Activated CD8-positive, alpha-beta T cell treated with anti-CD3 and anti-CD28 coated beads for 36 hours (primary cell): ENCODE measurements at regions of chr11 and their contacts with region 1.

Region 1: GRCh38 chr11:65013692-65014145 is 241 bp upstream of the ARL2 start:
- DNase-seq: peak; percentile 91
- ATAC-seq: peak; percentile 90
- H3K4me3 Mint-ChIP-seq: peak overlapping the region; percentile 79
- H3K27ac Mint-ChIP-seq: peak overlapping the region; percentile 99
- H3K4me1 Mint-ChIP-seq: peaks cover 23% of the 10 kb centered on the region
- H3K27me3 Mint-ChIP-seq: no peaks in the 10 kb centered on the region
- CTCF ChIP-seq: peak; percentile 77

Region 2: DNA sequence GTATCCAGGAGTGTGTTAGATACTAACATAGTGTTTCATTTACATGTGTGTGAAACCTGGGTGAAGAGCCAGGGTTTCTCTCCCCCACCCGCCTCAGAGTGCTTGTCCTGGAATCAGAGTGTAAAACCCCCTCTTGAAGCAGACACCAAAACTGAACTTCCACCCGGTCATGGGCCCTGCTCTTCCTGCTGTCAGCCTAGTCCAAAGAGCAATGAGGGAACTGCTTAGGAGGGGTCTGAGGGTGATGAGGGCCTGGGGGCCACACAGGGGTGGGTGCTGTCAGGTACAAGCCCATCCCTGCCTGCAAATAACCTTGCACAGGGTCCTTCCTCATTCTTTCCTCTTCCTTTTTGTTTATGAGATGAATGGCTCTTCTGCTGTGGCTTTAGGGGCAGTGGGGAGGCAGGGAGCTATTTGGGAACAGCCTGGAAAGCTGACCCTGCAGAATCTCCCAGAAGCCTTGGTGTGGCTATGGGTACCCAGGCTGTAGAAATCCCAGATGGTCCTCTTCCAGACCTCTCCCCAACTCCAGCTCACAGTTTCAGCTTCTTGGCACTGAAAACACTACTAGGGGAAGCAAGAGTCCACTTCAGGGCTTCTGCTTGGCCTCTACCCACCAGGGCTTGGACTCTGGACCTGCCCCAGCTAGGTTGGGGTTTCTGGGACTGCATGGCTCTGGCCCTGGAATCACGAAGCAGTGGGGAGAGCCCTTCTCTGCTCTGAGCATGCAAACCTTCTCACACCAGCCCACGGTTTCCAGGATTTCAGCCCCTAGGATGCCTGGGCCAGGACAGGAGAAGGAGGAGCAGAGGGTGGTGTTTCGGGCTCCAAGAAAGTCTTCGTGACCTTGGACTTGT is 25.5 kb before region 1 on chr11:
- CTCF ChIA-PET with region 1: no interaction called
- POLR2A ChIA-PET with region 1: no interaction called
- intact Hi-C with region 1: no loop called
- DNase-seq: no peak
- ATAC-seq: no peak
- H3K4me3 Mint-ChIP-seq: no peak overlapping the region
- H3K27ac Mint-ChIP-seq: no peak overlapping the region
- H3K4me1 Mint-ChIP-seq: peaks cover 6% of the 10 kb centered on the region
- H3K27me3 Mint-ChIP-seq: peaks cover 4% of the 10 kb centered on the region
- CTCF ChIP-seq: no peak

Region 3: GRCh38 chr11:65003282-65003681 is 10.4 kb before region 1 on chr11:
- CTCF ChIA-PET with region 1: interaction called, 11 read pairs
- POLR2A ChIA-PET with region 1: interaction called, 3 read pairs
- intact Hi-C with region 1: no loop called
- DNase-seq: no peak
- ATAC-seq: no peak
- H3K4me3 Mint-ChIP-seq: no peak overlapping the region
- H3K27ac Mint-ChIP-seq: no peak overlapping the region
- H3K4me1 Mint-ChIP-seq: peaks cover 7% of the 10 kb centered on the region
- H3K27me3 Mint-ChIP-seq: no peaks in the 10 kb centered on the region
- CTCF ChIP-seq: no peak

Region 4: GRCh38 chr11:65040847-65041621 is 27.3 kb after region 1 on chr11 and contains the start of gene SAC3D1:
- CTCF ChIA-PET with region 1: interaction called, 18 read pairs
- POLR2A ChIA-PET with region 1: interaction called, 6 read pairs
- intact Hi-C with region 1: no loop called
- DNase-seq: peak; percentile 95
- ATAC-seq: peak; percentile 96
- H3K4me3 Mint-ChIP-seq: peak within 1 kb of the TSS; percentile 87
- H3K27ac Mint-ChIP-seq: peak within 1 kb of the TSS; percentile 97
- H3K4me1 Mint-ChIP-seq: peaks cover 13% of the 10 kb centered on the region
- H3K27me3 Mint-ChIP-seq: no peaks in the 10 kb centered on the region
- CTCF ChIP-seq: no peak
- total RNA-seq, gene SAC3D1: 14.0 to 14.5 TPM

Region 5: GRCh38 chr11:65111744-65112414 is 98.2 kb after region 1 on chr11 and contains the start of gene TM7SF2:
- CTCF ChIA-PET with region 1: interaction called, 45 read pairs
- POLR2A ChIA-PET with region 1: interaction called, 10 read pairs
- intact Hi-C with region 1: loop called (anchors 10 kb)
- DNase-seq: peak; percentile 98
- ATAC-seq: peak; percentile 77
- H3K4me3 Mint-ChIP-seq: peak within 1 kb of the TSS; percentile 86
- H3K27ac Mint-ChIP-seq: peak within 1 kb of the TSS; percentile 84
- H3K4me1 Mint-ChIP-seq: peaks cover 43% of the 10 kb centered on the region
- H3K27me3 Mint-ChIP-seq: no peaks in the 10 kb centered on the region
- CTCF ChIP-seq: no peak
- total RNA-seq, gene TM7SF2: 12.4 to 17.5 TPM